ENCODE measurements at regions of chr6 and their contacts with region 1.

Region 1: GRCh38 chr6:148746363-148747144 is at the start of gene UST:
- DNase-seq: peak; percentile 67
- H3K4me3 ChIP-seq: peak within 1 kb of the TSS; percentile 46 to 95 (median 62)
- H3K27ac ChIP-seq: peak within 1 kb of the TSS; percentile 81 to 88 (median 86)
- H3K4me1 ChIP-seq: peaks cover 3 to 22% (median 19%) of the 10 kb centered on the region in 4 donors
- H3K27me3 ChIP-seq: peaks cover 40% of the 10 kb centered on the region
- CTCF ChIP-seq: peak in 4 of 5 experiments; percentile 20 to 26 (median 22)
- EP300 ChIP-seq: no peak
- POLR2A ChIP-seq: peak; percentile 25
- total RNA-seq, gene UST: 4.8 to 9.0 (median 7.8) TPM

Region 2: DNA sequence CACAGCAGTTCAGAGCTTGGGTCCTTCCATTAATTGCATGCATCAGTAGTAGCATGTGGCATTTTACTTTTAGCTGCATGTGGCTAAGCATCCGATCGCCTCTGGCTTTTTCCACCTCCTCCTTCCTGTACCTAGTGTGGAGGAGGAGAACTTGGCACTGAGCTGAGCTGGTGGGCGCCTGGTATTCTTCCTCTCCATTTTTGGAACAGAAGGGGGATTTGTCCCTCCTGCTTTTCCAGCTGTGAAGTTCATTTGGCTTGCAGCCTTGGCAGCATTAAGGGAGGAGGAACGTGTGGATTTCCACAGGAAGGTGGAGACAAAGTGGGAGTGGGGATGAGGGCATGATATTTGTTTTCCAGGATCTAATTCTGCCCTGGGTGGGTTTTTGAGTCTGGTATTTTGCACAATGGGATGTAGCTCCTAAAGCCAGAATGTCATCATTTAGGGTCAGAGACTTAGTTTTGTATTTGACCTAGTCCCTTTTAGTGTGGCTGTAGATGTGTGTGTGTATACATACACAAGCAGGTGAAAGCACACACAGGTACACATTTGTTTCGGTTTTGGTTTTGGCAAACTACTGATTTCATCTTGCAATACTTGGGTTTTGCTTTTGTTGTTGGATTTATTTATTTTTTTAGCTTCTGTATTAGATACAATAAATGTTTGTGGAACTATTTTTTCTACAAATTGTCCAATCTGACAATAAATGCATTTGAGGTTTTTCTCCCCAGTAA is 313.9 kb before region 1 on chr6:
- in situ Hi-C with region 1: no loop called
- intact Hi-C with region 1: no loop called
- DNase-seq: no peak
- H3K4me3 ChIP-seq: no peak overlapping the region
- H3K27ac ChIP-seq: no peak overlapping the region
- H3K4me1 ChIP-seq: peaks cover 0 to 6% (median 0%) of the 10 kb centered on the region in 4 donors
- H3K27me3 ChIP-seq: no peaks in the 10 kb centered on the region
- CTCF ChIP-seq: no peak
- EP300 ChIP-seq: no peak
- POLR2A ChIP-seq: no peak

Region 3: GRCh38 chr6:148689168-148689567 is 57.4 kb before region 1 on chr6:
- in situ Hi-C with region 1: no loop called
- intact Hi-C with region 1: no loop called
- DNase-seq: no peak
- H3K4me3 ChIP-seq: no peak overlapping the region
- H3K27ac ChIP-seq: no peak overlapping the region
- H3K4me1 ChIP-seq: no peaks in the 10 kb centered on the region
- H3K27me3 ChIP-seq: no peaks in the 10 kb centered on the region
- CTCF ChIP-seq: no peak
- EP300 ChIP-seq: no peak
- POLR2A ChIP-seq: no peak

Region 4: DNA sequence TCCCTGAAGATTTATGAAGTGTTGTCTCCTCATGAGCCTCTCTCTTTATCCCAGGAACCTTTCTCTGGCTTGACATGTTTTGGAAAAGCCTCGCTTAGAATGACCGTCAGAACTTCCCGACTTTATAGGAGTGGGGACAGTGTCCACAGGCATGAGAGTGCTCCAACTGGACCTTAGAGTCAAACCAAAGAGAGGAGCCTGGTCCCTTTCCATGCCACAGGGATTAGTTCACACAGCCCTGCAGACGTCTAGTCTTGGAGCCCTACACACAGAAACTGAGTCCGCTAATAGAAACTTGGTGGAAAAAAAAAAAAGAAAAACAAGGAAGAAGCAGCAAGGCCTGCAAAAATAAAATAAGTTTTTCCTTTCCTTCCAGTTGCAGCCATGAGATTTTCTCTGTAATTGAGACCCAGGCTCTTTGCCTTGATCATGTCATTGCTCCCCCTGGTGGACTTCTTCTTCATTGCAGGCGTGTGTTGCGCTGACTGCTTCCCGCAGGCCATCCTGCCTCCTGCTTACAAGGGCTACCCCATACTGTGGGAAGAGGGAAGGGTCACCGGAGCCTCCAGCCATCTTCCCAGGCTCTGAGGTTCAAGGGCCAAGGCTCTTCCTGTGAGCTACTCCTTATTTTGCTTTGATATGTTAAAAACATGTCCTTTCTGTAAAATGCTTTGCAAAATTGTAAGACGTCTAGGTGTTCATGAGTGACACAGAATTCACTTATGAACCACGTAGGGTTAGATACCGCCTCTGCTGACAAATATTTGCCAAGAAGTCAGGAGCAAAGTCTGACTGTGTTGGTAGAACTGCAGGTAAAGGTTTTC is 201.3 kb after region 1 on chr6:
- in situ Hi-C with region 1: loop called in 2 of 4 experiments (anchors 10 kb)
- intact Hi-C with region 1: loop called (anchors 5 kb)
- DNase-seq: peak; percentile 87
- H3K4me3 ChIP-seq: no peak overlapping the region
- H3K27ac ChIP-seq: no peak overlapping the region
- H3K4me1 ChIP-seq: peaks cover 0 to 21% (median 8%) of the 10 kb centered on the region in 4 donors
- H3K27me3 ChIP-seq: no peaks in the 10 kb centered on the region
- CTCF ChIP-seq: peak; percentile 74 to 89 (median 87)
- EP300 ChIP-seq: no peak
- POLR2A ChIP-seq: no peak

Measured in transverse colon (tissue), 4 donors.